Endothelial cell of umbilical vein (primary cell): ENCODE measurements at regions of chr10 and their contacts with region 1.

Region 1: GRCh38 chr10:31490858-31491504 is 172.0 kb downstream of the ZEB1 start:
- DNase-seq: peak; percentile 63
- H3K4me3 ChIP-seq: no peak overlapping the region
- H3K27ac ChIP-seq: peak overlapping the region; percentile 7
- H3K4me1 ChIP-seq: peaks cover 13% of the 10 kb centered on the region
- H3K27me3 ChIP-seq: no peaks in the 10 kb centered on the region
- CTCF ChIP-seq: peak; percentile 50 to 53
- POLR2A ChIP-seq: no peak

Region 2: DNA sequence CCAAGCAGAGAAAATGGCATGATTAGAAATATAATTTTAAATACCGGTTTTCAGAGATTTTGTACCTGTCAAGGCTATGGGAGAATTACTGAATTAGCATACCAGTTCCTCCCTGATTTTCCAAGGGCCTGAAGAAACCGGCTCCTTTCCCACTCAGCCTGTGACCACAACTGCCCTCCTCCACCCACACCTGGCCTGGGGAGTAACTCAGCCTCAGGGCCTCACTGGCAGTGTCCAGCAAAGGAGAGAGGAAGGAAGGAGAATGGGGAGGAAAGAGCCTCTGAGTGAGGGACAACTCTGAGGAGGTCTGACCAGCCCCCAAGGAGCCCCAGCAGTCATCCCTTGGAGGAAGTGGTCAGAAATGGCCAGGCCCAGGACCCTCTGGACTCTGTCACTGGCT is 763.5 kb before region 1 on chr10:
- CTCF ChIA-PET with region 1: interaction called, 6 read pairs
- POLR2A ChIA-PET with region 1: no interaction called
- dilution Hi-C with region 1: no loop called
- intact Hi-C with region 1: loop called (anchors 2 kb)
- DNase-seq: no peak
- H3K4me3 ChIP-seq: no peak overlapping the region
- H3K27ac ChIP-seq: no peak overlapping the region
- H3K4me1 ChIP-seq: no peaks in the 10 kb centered on the region
- H3K27me3 ChIP-seq: no peaks in the 10 kb centered on the region
- CTCF ChIP-seq: no peak
- POLR2A ChIP-seq: no peak

Region 3: GRCh38 chr10:30736685-30737232 is 754.2 kb before region 1 on chr10:
- CTCF ChIA-PET with region 1: interaction called, 11 read pairs
- POLR2A ChIA-PET with region 1: no interaction called
- dilution Hi-C with region 1: no loop called
- intact Hi-C with region 1: no loop called
- DNase-seq: peak; percentile 85
- H3K4me3 ChIP-seq: no peak overlapping the region
- H3K27ac ChIP-seq: peak overlapping the region; percentile 57
- H3K4me1 ChIP-seq: peaks cover 4% of the 10 kb centered on the region
- H3K27me3 ChIP-seq: no peaks in the 10 kb centered on the region
- CTCF ChIP-seq: no peak
- POLR2A ChIP-seq: no peak

Region 4: DNA sequence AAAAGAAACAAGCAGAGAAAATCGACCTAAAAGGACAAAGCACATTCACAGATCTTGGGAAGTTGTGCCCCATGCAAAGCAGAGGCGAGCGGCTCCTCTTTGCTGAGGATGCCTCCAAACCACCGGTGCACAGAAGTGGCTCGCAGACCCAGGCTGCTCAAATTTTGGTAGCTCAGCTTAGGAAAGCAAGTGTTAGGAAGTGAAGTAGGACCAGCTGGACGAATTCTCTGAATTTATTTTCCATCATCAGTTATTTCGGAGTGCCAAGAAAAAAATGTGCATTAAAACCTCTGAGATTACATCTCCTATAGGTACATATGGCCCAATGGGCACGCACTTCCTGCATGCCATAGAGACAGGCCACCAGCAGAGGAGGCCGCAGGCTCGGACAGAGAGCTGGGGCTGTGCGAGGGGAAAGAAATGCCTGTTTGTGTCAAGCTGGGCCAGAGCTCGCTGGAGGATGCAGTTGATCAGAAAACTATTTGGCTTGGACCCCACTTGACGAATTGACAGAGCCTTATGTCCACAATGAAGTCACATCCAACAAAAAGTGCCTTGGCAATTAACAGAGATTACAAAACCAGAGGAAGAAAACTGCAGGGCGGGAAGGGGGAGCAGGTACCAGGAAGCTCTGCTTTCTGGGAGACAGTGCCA is 739.2 kb before region 1 on chr10:
- CTCF ChIA-PET with region 1: interaction called, 21 read pairs
- POLR2A ChIA-PET with region 1: no interaction called
- dilution Hi-C with region 1: no loop called
- intact Hi-C with region 1: no loop called
- DNase-seq: peak; percentile 76
- H3K4me3 ChIP-seq: no peak overlapping the region
- H3K27ac ChIP-seq: no peak overlapping the region
- H3K4me1 ChIP-seq: peaks cover 5% of the 10 kb centered on the region
- H3K27me3 ChIP-seq: no peaks in the 10 kb centered on the region
- CTCF ChIP-seq: peak; percentile 90 to 98
- POLR2A ChIP-seq: no peak

Region 5: DNA sequence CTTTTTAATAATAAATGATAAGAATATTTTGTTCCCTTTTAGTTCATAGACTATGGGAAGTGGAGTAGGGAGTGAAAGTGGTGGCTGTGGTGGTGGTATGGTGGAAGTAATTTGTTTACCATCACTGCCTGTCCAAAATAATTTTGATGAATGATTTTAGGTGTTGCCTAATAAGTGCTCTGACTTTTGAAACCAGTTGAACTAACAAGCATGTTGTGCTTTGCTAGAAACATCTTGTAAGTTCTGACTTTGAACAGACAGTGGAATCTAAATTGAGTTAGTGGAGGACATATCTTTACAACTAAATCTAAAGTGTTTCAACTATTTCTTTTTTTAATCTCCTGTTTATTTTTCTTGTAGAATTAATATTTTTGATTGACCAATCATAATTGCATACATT is 122.3 kb before region 1 on chr10:
- CTCF ChIA-PET with region 1: no interaction called
- POLR2A ChIA-PET with region 1: no interaction called
- dilution Hi-C with region 1: no loop called
- intact Hi-C with region 1: no loop called
- DNase-seq: no peak
- H3K4me3 ChIP-seq: no peak overlapping the region
- H3K27ac ChIP-seq: no peak overlapping the region
- H3K4me1 ChIP-seq: no peaks in the 10 kb centered on the region
- H3K27me3 ChIP-seq: no peaks in the 10 kb centered on the region
- CTCF ChIP-seq: no peak
- POLR2A ChIP-seq: no peak

Region 6: DNA sequence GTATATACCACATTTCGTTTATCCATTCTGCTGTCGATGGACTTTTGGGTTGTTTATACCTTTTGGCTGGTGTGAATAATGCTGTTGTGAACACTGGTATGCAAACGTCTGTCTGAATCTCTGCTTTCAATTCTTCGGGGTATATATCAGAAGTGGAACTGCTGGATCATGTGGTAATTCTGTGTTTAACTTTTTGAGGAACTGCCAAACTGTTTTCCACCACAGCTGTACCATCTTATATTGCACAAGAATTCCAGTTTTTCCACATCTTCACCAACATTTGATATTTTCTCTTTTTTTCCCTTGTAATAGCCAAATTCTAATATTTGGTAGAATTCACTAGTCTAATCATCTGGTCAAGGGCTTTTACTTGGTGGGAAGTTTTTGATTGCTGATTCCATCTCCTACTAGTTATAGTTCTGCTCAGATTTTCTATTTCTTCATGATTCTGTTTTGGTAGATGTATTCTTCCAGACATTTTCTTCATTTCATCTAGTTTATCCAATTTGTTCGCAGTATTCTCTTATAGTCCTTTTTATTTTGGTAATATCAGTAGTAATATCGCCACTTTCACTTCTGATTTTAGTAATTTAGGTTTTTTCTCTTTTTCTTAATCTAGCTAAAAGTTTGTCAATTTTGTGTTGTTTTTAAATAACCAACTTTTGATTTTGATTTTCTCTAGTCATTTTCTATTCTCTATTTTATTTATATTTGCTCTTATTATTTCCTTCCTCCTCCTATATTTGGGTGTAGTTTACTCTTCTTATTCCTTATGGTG is 99.2 kb after region 1 on chr10:
- CTCF ChIA-PET with region 1: no interaction called
- POLR2A ChIA-PET with region 1: no interaction called
- dilution Hi-C with region 1: no loop called
- intact Hi-C with region 1: no loop called
- DNase-seq: no peak
- H3K4me3 ChIP-seq: no peak overlapping the region
- H3K27ac ChIP-seq: no peak overlapping the region
- H3K4me1 ChIP-seq: no peaks in the 10 kb centered on the region
- H3K27me3 ChIP-seq: peaks cover 2 to 4% of the 10 kb centered on the region in 2 experiments
- CTCF ChIP-seq: no peak
- POLR2A ChIP-seq: no peak